Activated CD4-positive, alpha-beta T cell treated with anti-CD3 and anti-CD28 coated beads for 36 hours (primary cell): ENCODE measurements at regions of chr1 and their contacts with region 1.

Region 1: GRCh38 chr1:46223472-46223943 is 20.4 kb downstream of the LURAP1 start:
- DNase-seq: peak; percentile 82
- ATAC-seq: peak; percentile 100
- H3K4me3 Mint-ChIP-seq: no peak overlapping the region
- H3K27ac Mint-ChIP-seq: no peak overlapping the region
- H3K4me1 Mint-ChIP-seq: peaks cover under 1% of the 10 kb centered on the region
- H3K27me3 Mint-ChIP-seq: no peaks in the 10 kb centered on the region

Region 2: DNA sequence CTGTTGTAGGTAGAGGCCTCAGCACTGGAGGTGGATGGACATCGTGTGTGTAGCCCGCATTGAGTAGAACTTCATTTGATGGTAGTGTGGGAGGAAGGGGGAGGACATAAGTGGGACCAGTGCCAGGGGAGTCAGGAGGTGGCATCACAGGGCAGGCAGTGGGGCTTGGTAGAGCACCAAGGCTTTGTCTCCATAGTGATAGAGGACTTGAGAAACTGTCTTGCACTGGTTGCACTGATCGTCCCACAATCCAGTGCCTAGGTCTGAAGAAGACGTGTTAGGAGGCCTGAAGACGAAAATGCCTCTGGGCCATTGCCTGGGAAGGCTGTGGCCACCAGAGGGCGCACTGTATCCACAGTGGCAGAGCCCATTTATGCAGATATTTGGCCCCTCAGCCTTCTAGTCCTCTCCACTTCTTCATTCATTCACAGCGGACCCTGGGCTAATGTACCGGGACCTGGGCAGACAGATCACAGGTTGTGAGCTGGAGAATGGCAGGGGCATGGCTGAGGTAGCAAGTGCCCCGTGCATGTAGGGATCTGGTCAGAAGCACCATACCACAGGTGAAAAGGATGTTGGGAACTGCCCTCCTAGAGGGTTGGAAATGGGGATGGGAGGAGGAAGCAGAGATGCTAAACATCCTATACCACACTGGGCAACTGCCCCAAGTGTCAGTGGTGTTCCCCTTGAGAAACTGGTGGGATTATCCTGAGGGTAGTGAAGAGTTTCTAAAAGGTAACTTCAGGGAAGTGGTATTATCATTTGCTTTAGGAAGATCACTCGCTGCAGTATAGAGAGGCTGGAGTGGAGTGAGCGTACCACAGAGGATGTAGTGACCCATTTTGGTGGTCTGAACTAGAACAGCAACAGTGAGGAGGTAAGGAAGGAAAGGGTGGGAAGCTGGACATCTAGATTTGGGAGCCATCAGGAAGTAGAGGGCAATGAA is 186.3 kb before region 1 on chr1:
- CTCF ChIA-PET with region 1: interaction called, 38 read pairs
- POLR2A ChIA-PET with region 1: no interaction called
- intact Hi-C with region 1: loop called (anchors 1 kb)
- DNase-seq: peak; percentile 92
- ATAC-seq: peak; percentile 84
- H3K4me3 Mint-ChIP-seq: no peak overlapping the region
- H3K27ac Mint-ChIP-seq: no peak overlapping the region
- H3K4me1 Mint-ChIP-seq: no peaks in the 10 kb centered on the region
- H3K27me3 Mint-ChIP-seq: no peaks in the 10 kb centered on the region

Region 3: GRCh38 chr1:46179138-46180081 is 44.1 kb before region 1 on chr1:
- CTCF ChIA-PET with region 1: interaction called, 43 read pairs
- POLR2A ChIA-PET with region 1: no interaction called
- intact Hi-C with region 1: loop called (anchors 1 kb)
- DNase-seq: peak; percentile 80
- ATAC-seq: peak; percentile 83
- H3K4me3 Mint-ChIP-seq: no peak overlapping the region
- H3K27ac Mint-ChIP-seq: no peak overlapping the region
- H3K4me1 Mint-ChIP-seq: peaks cover 7% of the 10 kb centered on the region
- H3K27me3 Mint-ChIP-seq: no peaks in the 10 kb centered on the region

Region 4: GRCh38 chr1:46197964-46198811 is 25.3 kb before region 1 on chr1 and contains the start of gene POMGNT1:
- CTCF ChIA-PET with region 1: interaction called, 18 read pairs
- POLR2A ChIA-PET with region 1: no interaction called
- intact Hi-C with region 1: no loop called
- DNase-seq: peak; percentile 87
- ATAC-seq: peak; percentile 94
- H3K4me3 Mint-ChIP-seq: peak within 1 kb of the TSS; percentile 84
- H3K27ac Mint-ChIP-seq: peak within 1 kb of the TSS; percentile 82
- H3K4me1 Mint-ChIP-seq: peaks cover 19% of the 10 kb centered on the region
- H3K27me3 Mint-ChIP-seq: peaks cover 2% of the 10 kb centered on the region
- total RNA-seq, gene POMGNT1: 36.4 to 36.5 TPM

Region 5: DNA sequence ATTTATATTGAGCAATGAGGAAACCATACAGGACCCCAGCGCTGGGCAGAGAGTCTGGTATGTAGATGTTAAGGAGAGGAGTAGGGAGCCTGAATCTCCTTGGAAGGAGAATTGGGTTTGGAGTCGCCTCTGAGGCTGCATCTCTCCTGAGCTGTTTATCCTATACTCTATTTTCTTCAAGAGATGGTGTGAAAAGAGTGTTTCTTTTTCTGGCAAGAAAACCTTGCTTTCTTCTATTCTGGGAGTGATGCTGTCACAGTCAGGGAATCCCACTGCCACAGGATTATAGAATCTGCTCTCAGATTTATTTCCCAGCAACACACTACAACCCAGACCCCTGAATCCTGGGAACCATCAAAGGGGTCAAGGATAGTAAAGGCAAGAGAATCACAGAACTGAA is 17.1 kb before region 1 on chr1:
- CTCF ChIA-PET with region 1: interaction called, 11 read pairs
- POLR2A ChIA-PET with region 1: interaction called, 3 read pairs
- intact Hi-C with region 1: no loop called
- DNase-seq: no peak
- ATAC-seq: no peak
- H3K4me3 Mint-ChIP-seq: no peak overlapping the region
- H3K27ac Mint-ChIP-seq: no peak overlapping the region
- H3K4me1 Mint-ChIP-seq: peaks cover 8% of the 10 kb centered on the region
- H3K27me3 Mint-ChIP-seq: peaks cover 2% of the 10 kb centered on the region

Region 6: DNA sequence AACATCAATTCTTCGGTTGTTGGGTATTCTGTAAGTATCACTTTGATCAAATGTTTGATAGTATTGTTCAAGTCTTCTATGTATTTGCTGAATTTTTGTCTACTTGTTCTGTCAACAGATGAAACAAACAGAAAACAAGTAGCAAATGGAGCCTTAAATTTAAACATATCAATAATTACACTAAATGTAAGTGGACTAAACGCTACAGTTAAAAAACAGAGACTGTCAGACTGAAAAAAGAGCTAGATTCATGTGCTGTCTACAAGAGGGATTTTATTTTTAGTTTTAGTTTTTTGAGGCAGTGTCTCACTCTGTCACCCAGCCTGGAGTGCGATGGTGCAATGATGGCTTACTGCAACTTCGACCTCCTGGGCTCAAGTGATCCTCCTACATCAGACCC is 13.4 kb after region 1 on chr1:
- CTCF ChIA-PET with region 1: interaction called, 15 read pairs
- POLR2A ChIA-PET with region 1: no interaction called
- intact Hi-C with region 1: no loop called
- DNase-seq: no peak
- ATAC-seq: no peak
- H3K4me3 Mint-ChIP-seq: no peak overlapping the region
- H3K27ac Mint-ChIP-seq: no peak overlapping the region
- H3K4me1 Mint-ChIP-seq: no peaks in the 10 kb centered on the region
- H3K27me3 Mint-ChIP-seq: no peaks in the 10 kb centered on the region